A549 (cell line): ENCODE measurements at regions of chr15 and their contacts with region 1.

Region 1: DNA sequence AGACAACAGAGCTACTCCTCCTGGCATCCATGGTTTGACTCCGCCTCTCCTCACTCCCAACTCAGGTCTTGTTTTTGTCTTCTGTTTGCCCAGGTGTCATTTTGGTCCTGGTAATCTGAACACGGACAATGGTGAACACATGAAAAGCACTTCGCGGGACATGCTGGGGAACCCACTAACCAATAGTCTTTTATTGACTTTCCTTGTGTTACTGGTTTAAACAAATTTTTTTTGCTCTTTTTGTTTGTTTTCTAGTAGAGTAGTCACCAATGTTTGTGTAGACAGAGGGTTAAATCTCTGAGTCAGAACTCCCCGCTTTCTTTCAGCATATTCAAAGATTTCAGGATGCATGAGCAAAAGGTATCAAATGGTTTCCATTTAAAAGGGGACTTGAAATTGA is 38.3 kb downstream of the LARP6 start:
- DNase-seq: peak in 1 of 2 experiments; percentile 53
- ATAC-seq: peak; percentile 52 to 53; a peak in 5 of 6 replicates
- H3K4me3 ChIP-seq: no peak overlapping the region
- H3K27ac ChIP-seq: 0 out of 6 replicates have a peak overlapping the region, but pooled peaks of 1 of the 2 experiments have one; percentile 14
- H3K4me1 ChIP-seq: peaks cover 23% of the 10 kb centered on the region
- CTCF ChIP-seq: no peak
- EP300 ChIP-seq: no peak
- POLR2A ChIP-seq: no peak
- RAD21 ChIP-seq: no peak

Region 2: DNA sequence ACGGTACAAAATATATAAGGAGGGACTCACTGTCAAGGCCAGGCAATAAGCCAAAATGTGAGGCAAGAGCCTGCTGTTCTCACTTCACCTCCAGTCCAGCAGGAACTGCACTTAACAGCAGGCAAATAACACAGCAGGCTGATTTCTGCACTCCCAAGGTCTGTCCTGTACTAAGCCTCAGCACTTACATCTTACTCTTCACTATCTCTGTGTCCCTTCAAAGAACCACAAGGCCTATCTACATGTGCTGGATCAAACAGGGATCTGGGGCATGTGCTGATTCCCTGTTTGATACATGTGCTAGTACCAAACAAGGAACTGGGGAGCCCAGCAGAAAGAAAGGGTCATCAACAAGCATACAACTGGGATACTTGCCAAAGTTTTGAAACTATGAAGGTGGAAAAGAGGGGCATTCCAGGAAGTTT is 74.5 kb before region 1 on chr15:
- CTCF ChIA-PET with region 1: interaction called, 29 read pairs
- POLR2A ChIA-PET with region 1: no interaction called
- DNase-seq: peak; percentile 55 to 76
- ATAC-seq: peak; percentile 81 to 83
- H3K4me3 ChIP-seq: no peak overlapping the region
- H3K27ac ChIP-seq: peak overlapping the region; percentile 63 to 80
- H3K4me1 ChIP-seq: peaks cover 42% of the 10 kb centered on the region
- CTCF ChIP-seq: no peak
- EP300 ChIP-seq: no peak
- POLR2A ChIP-seq: no peak
- RAD21 ChIP-seq: no peak

Region 3: GRCh38 chr15:70754862-70755261 is 60.8 kb before region 1 on chr15:
- CTCF ChIA-PET with region 1: interaction called, 42 read pairs
- POLR2A ChIA-PET with region 1: interaction called, 8 read pairs
- DNase-seq: no peak
- ATAC-seq: no peak
- H3K4me3 ChIP-seq: no peak overlapping the region
- H3K27ac ChIP-seq: no peak overlapping the region
- H3K4me1 ChIP-seq: peaks cover 35% of the 10 kb centered on the region
- CTCF ChIP-seq: peak; percentile 29; the same call in 2 of the 3 replicates
- EP300 ChIP-seq: no peak
- POLR2A ChIP-seq: no peak
- RAD21 ChIP-seq: peak; percentile 36 to 49; a peak in 4 of 5 replicates

Region 4: GRCh38 chr15:70799667-70800450 is 15.8 kb before region 1 on chr15:
- CTCF ChIA-PET with region 1: interaction called, 274 read pairs
- POLR2A ChIA-PET with region 1: interaction called, 6 read pairs
- DNase-seq: no peak
- ATAC-seq: peak in 1 of 2 experiments; percentile 18; a peak in 1 of 6 replicates
- H3K4me3 ChIP-seq: no peak overlapping the region
- H3K27ac ChIP-seq: peak overlapping the region; percentile 37 to 93; a peak in 5 of 6 replicates
- H3K4me1 ChIP-seq: peaks cover 38% of the 10 kb centered on the region
- CTCF ChIP-seq: no peak
- EP300 ChIP-seq: no peak
- POLR2A ChIP-seq: no peak
- RAD21 ChIP-seq: no peak

Region 5: GRCh38 chr15:70826634-70827033 is 11.0 kb after region 1 on chr15:
- CTCF ChIA-PET with region 1: interaction called, 53 read pairs
- POLR2A ChIA-PET with region 1: no interaction called
- DNase-seq: peak; percentile 58 to 78
- ATAC-seq: peak; percentile 67 to 68; a peak in 5 of 6 replicates
- H3K4me3 ChIP-seq: no peak overlapping the region
- H3K27ac ChIP-seq: peak overlapping the region; percentile 69 to 85
- H3K4me1 ChIP-seq: peaks cover 41% of the 10 kb centered on the region
- CTCF ChIP-seq: no peak
- EP300 ChIP-seq: no peak
- POLR2A ChIP-seq: no peak
- RAD21 ChIP-seq: no peak